ENCODE measurements at regions of chr9 and their contacts with region 1.

Region 1: DNA sequence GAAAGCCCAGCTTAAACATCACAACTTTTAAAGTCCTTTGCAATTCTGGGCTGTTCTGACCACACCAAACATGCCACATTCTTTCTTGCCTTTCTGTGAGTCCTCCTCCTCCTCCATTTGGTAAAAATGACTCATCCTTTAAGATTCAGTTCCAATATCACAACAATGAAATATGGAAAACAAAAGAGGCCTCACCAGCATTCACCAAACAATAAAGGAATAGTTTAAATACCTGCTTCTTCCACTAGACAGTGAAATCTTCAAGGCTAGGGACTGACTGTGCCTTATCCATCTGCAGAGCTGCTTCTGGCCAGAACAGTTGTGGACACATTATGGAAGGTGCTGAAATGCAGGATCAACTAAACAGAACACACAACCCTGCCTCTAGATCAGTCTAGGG is 36.0 kb downstream of the NR6A1 start:
- DNase-seq: peak; percentile 17
- H3K4me3 ChIP-seq: peak overlapping the region; percentile 56
- H3K27ac ChIP-seq: peak overlapping the region; percentile 90
- H3K4me1 ChIP-seq: peaks cover 47% of the 10 kb centered on the region
- CTCF ChIP-seq: no peak

Region 2: GRCh38 chr9:124764774-124765438 is 29.8 kb after region 1 on chr9:
- CTCF ChIA-PET with region 1: interaction called, 6 read pairs
- POLR2A ChIA-PET with region 1: interaction called, 5 read pairs
- intact Hi-C with region 1: loop called (anchors 1 kb)
- DNase-seq: peak; percentile 80
- H3K4me3 ChIP-seq: peak overlapping the region; percentile 49
- H3K27ac ChIP-seq: peak overlapping the region; percentile 56
- H3K4me1 ChIP-seq: peaks cover 69% of the 10 kb centered on the region
- CTCF ChIP-seq: peak; percentile 78

Region 3: GRCh38 chr9:124906966-124907365 is 171.8 kb after region 1 on chr9:
- CTCF ChIA-PET with region 1: no interaction called
- POLR2A ChIA-PET with region 1: no interaction called
- intact Hi-C with region 1: no loop called
- DNase-seq: no peak
- H3K4me3 ChIP-seq: no peak overlapping the region
- H3K27ac ChIP-seq: no peak overlapping the region
- H3K4me1 ChIP-seq: no peaks in the 10 kb centered on the region
- CTCF ChIP-seq: no peak